WTC11 (cell line): ENCODE measurements at regions of chr12 and their contacts with region 1.

Region 1: GRCh38 chr12:6470375-6471163 is at the start of gene VAMP1:
- DNase-seq: peak; percentile 99
- ATAC-seq: peak; percentile 96
- H3K4me3 Mint-ChIP-seq: peak within 1 kb of the TSS; percentile 68
- H3K27ac Mint-ChIP-seq: peak within 1 kb of the TSS; percentile 93
- H3K4me1 Mint-ChIP-seq: peaks cover 20% of the 10 kb centered on the region
- H3K27me3 Mint-ChIP-seq: peaks cover 18% of the 10 kb centered on the region
- CTCF ChIP-seq: no peak
- total RNA-seq, gene VAMP1: 12.8 to 14.3 TPM (median 13.8 TPM) in 3 replicates

Region 2: DNA sequence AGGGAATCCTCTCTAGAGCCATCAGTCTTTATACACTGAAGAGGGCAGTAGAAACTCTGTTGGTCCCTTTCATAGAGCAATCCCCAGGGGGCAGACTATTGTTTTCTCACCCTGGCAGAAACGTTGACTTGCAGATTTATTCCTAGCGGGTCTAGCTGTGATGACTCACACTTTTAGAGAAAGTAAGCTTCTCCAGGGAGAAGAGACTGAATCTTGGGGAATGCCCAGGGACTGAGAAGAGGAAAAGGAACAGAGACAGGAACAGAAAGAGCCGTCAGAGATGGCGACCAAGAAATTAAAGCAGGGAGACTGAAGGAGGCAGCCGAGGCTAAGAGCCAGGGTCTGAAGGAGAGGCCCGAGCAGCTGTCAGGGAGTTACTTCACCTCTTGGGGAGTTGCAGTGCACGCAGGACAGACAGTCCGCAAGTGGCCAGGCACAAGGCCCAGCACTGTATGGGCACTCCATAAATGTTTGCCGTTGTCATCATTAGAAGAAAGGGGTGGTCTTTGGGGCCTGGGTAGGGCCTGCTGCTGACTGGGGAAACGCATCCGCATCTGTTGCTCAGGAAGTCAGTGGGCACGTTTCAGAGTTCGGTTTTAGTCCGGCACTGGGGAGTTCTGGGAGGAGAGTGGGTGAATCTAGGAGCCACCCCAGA is 147.1 kb before region 1 on chr12:
- CTCF ChIA-PET with region 1: interaction called, 59 read pairs
- POLR2A ChIA-PET with region 1: interaction called, 3 read pairs
- DNase-seq: peak; percentile 45
- ATAC-seq: peak; percentile 59
- H3K4me3 Mint-ChIP-seq: peak overlapping the region; percentile 62
- H3K27ac Mint-ChIP-seq: peak overlapping the region; percentile 98
- H3K4me1 Mint-ChIP-seq: peaks cover 64% of the 10 kb centered on the region
- H3K27me3 Mint-ChIP-seq: no peaks in the 10 kb centered on the region
- CTCF ChIP-seq: no peak

Region 3: DNA sequence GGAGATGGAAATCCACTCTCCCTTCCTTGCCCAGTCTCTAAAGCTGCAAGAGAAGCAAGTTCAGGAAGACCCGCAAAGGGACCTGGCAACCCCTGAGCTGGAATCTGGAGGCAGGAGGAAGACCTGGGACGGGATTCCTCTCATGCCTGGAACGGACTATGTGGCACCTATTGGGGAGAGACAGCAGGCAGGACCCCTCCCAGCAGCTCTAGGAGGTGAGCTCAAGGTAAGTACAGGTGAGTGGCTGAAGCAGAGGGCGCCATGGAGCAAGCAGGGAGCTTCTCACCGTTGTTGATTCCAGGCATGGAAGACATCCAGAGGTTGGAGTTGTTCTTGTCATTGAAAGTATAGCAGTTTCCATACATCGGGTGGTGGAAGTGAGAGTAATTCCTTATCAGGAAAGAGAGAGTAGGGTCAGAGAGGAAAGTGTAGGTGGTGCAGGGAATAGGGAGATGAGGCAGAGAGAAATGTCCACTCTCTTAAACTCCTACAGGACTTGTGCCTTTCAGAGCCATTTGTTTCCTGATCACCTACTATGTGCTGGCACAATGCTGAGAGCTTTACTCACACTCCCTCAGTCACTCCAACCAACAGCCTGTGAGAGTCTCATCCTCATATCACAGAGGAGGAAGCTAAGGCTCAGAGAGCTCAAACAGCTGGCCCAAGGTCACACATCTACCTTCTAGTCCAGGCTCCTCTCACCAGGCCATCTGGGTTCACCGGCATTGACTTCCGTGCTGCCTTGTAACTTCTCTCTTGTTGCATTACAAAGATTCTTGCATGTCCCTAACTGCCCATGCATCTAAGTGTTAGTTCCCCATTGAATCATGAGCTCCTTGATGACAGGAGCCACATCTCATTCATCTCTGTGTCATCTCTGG is 114.8 kb before region 1 on chr12:
- CTCF ChIA-PET with region 1: interaction called, 15 read pairs
- POLR2A ChIA-PET with region 1: interaction called, 7 read pairs
- DNase-seq: peak; percentile 73
- ATAC-seq: peak; percentile 96
- H3K4me3 Mint-ChIP-seq: no peak overlapping the region
- H3K27ac Mint-ChIP-seq: peak overlapping the region; percentile 34; the same call in 1 of the 2 replicates
- H3K4me1 Mint-ChIP-seq: peaks cover 25% of the 10 kb centered on the region
- H3K27me3 Mint-ChIP-seq: no peaks in the 10 kb centered on the region
- CTCF ChIP-seq: no peak

Region 4: DNA sequence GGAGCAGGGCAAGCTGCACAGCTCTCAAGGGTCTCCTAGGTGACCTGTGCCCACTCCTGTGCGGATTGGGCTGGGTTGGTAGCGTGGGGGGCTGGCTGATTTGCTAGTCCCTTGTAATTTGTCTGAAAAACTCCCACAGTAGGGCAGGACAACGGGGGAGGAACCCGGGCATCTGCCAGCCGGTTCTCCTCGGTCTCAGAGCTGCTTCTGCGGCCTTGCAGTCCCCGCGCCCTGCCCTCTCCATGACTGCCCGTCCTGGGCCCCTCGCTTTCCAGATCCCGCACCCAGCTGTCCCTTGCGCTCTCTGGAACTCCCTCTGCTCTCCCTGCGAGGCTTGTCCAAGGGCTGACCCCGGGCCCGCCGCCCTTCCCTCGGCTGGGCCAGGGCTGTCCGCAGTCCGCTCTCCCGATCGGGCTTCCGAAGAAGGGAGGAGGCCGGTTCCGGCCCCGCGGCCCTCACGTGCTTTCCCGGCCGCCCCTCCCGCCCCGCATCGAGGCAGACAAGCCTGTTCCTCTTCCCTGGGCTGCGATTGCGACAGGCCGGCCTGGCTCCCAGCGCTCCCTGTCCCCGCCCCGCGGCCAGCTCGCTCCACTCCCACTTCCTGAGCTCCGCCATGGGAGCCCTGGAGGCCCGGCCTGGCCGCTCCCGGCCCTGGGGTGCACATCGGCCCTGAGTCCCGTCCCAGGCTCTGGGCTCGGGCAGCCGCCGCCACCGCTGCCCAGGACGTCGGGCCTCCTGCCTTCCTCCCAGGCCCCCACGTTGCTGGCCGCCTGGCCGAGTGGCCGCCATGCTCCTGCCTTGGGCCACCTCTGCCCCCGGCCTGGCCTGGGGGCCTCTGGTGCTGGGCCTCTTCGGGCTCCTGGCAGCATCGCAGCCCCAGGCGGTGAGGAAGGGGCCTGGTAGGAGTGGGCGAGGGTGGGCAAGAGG is 86.7 kb before region 1 on chr12 and contains the start of gene LTBR:
- CTCF ChIA-PET with region 1: interaction called, 13 read pairs
- POLR2A ChIA-PET with region 1: interaction called, 3 read pairs
- DNase-seq: peak; percentile 78
- ATAC-seq: peak; percentile 68
- H3K4me3 Mint-ChIP-seq: 0 out of 2 replicates have a peak within 1 kb of the TSS, but pooled peaks have one; percentile 16
- H3K27ac Mint-ChIP-seq: no peak within 1 kb of the TSS
- H3K4me1 Mint-ChIP-seq: peaks cover 58% of the 10 kb centered on the region
- H3K27me3 Mint-ChIP-seq: peaks cover 38% of the 10 kb centered on the region
- CTCF ChIP-seq: no peak
- total RNA-seq, gene LTBR: 4.0 to 6.1 TPM (median 4.5 TPM) in 3 replicates

Region 5: GRCh38 chr12:6443361-6443983 is 27.1 kb before region 1 on chr12:
- CTCF ChIA-PET with region 1: interaction called, 25 read pairs
- POLR2A ChIA-PET with region 1: no interaction called
- DNase-seq: no peak
- ATAC-seq: no peak
- H3K4me3 Mint-ChIP-seq: no peak overlapping the region
- H3K27ac Mint-ChIP-seq: no peak overlapping the region; the same call in 1 of the 2 replicates
- H3K4me1 Mint-ChIP-seq: peaks cover 8% of the 10 kb centered on the region
- H3K27me3 Mint-ChIP-seq: no peaks in the 10 kb centered on the region
- CTCF ChIP-seq: no peak

Region 6: GRCh38 chr12:6540181-6540877 is 69.8 kb after region 1 on chr12:
- CTCF ChIA-PET with region 1: interaction called, 13 read pairs
- POLR2A ChIA-PET with region 1: interaction called, 5 read pairs
- DNase-seq: peak; percentile 88
- ATAC-seq: peak; percentile 55
- H3K4me3 Mint-ChIP-seq: peak overlapping the region; percentile 44
- H3K27ac Mint-ChIP-seq: peak overlapping the region; percentile 92
- H3K4me1 Mint-ChIP-seq: peaks cover 44% of the 10 kb centered on the region
- H3K27me3 Mint-ChIP-seq: no peaks in the 10 kb centered on the region; the same call in 1 of the 2 replicates
- CTCF ChIP-seq: no peak